A673 (cell line): ENCODE measurements at regions of chr1 and their contacts with region 1.

Region 1: GRCh38 chr1:183471743-183472487 is 384 bp upstream of the SMG7 start:
- DNase-seq: peak; percentile 100
- H3K4me3 ChIP-seq: peak overlapping the region; percentile 98
- H3K27ac ChIP-seq: peak overlapping the region; percentile 99
- H3K4me1 ChIP-seq: peaks cover 14% of the 10 kb centered on the region
- H3K27me3 ChIP-seq: no peaks in the 10 kb centered on the region
- CTCF ChIP-seq: no peak

Region 2: GRCh38 chr1:183543619-183544204 is 71.8 kb after region 1 on chr1:
- CTCF ChIA-PET with region 1: no interaction called
- POLR2A ChIA-PET with region 1: no interaction called
- intact Hi-C with region 1: loop called (anchors 1 kb)
- DNase-seq: peak; percentile 75
- H3K4me3 ChIP-seq: no peak overlapping the region
- H3K27ac ChIP-seq: no peak overlapping the region
- H3K4me1 ChIP-seq: peaks cover 7% of the 10 kb centered on the region
- H3K27me3 ChIP-seq: no peaks in the 10 kb centered on the region
- CTCF ChIP-seq: peak; percentile 79

Region 3: GRCh38 chr1:183622884-183623785 is 151.2 kb after region 1 on chr1:
- CTCF ChIA-PET with region 1: interaction called, 3 read pairs
- POLR2A ChIA-PET with region 1: no interaction called
- intact Hi-C with region 1: loop called (anchors 1 kb)
- DNase-seq: peak; percentile 68
- H3K4me3 ChIP-seq: no peak overlapping the region
- H3K27ac ChIP-seq: no peak overlapping the region
- H3K4me1 ChIP-seq: peaks cover 5% of the 10 kb centered on the region
- H3K27me3 ChIP-seq: no peaks in the 10 kb centered on the region
- CTCF ChIP-seq: peak; percentile 82